Motor neuron (in vitro differentiated cells): ENCODE measurements at regions of chr17 and their contacts with region 1.

Region 1: GRCh38 chr17:27506348-27507231 is 50.3 kb downstream of the KSR1 start:
- ATAC-seq: peak in 1 of 8 experiments; percentile 10
- H3K4me3 ChIP-seq: no peak overlapping the region
- H3K27ac ChIP-seq: no peak overlapping the region
- H3K4me1 ChIP-seq: peaks cover 0 to 15% of the 10 kb centered on the region in 2 donors

Region 2: DNA sequence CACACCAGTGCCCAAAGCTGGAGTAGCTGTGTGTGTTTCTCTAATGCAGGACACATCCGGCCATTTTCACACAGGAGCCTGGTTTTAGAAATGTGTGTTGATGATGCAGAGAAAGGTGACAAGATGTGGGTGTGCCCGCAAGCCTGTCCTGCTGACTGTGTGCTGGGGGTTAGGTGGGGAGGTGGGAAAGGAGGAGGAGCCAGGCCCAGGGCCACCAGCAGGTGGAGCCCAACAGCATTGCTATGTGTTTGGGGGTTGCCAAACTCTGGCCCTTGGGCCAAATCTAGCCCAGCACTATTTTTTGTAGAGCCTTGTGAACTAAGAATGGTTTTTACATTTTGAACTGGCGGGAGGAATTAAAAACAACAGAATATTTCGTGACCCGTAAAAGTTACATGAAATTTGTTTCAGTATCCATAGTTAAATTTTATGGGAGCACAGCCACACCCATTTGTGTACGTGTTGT is 62.7 kb after region 1 on chr17:
- in situ Hi-C with region 1: loop called in 1 of 9 experiments (anchors 10 kb)
- ATAC-seq: peak in 4 of 8 experiments; percentile 46 to 89 (median 49)
- H3K4me3 ChIP-seq: no peak overlapping the region
- H3K27ac ChIP-seq: no peak overlapping the region
- H3K4me1 ChIP-seq: peaks cover 0 to 9% of the 10 kb centered on the region in 2 donors